ENCODE measurements at regions of chr1 and their contacts with region 1.

Region 1: GRCh38 chr1:59699227-59699847 is 115.4 kb upstream of the HOOK1 start:
- DNase-seq: peak in 1 of 2 experiments; percentile 8
- H3K4me3 ChIP-seq: no peak overlapping the region
- H3K27ac ChIP-seq: no peak overlapping the region
- H3K4me1 ChIP-seq: no peaks in the 10 kb centered on the region; the same call in 1 of the 2 replicates
- H3K27me3 ChIP-seq: no peaks in the 10 kb centered on the region
- CTCF ChIP-seq: peak; percentile 96

Region 2: GRCh38 chr1:58874757-58875755 is 824.3 kb before region 1 on chr1:
- CTCF ChIA-PET with region 1: no interaction called
- POLR2A ChIA-PET with region 1: no interaction called
- intact Hi-C with region 1: loop called (anchors 2 kb)
- DNase-seq: peak; percentile 84 to 98
- H3K4me3 ChIP-seq: no peak overlapping the region; the same call in 1 of the 2 replicates
- H3K27ac ChIP-seq: peak overlapping the region; percentile 92
- H3K4me1 ChIP-seq: peaks cover 48% of the 10 kb centered on the region
- H3K27me3 ChIP-seq: no peaks in the 10 kb centered on the region
- CTCF ChIP-seq: no peak

Region 3: DNA sequence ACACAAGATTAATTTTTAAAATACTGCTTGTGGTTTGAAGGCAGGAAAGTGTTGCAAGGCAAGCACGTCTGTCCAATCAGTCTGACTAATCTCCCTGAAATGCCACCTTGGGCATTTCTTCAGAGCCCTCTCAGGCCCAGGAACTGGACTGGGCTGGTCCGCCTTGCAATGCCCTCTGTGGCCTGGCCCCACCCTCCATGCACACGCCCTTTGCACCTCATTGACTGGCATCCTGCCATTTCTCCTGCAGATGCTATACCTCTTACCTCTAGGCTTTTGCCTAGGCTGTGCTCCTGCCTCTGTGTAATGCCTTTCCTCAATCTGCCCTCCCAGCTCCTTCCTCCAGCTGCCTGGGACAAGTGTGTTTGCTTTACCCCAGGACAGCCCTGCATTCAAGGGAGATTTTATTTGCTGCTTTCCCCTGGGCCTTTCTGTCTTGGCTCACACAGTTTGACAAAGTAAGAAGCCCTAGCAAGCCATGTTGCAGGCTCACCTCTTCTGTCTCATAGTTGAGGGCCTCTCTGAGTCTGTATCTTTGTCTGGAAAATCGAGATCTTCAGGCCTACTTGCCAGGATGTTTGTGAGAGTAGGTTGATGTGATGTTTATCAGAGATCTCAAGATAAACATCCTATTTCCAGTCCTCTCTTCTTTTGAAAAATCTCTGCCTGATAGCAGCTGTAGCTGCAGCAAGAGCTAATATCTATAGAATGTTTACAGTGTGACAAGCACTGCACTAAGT is 766.3 kb before region 1 on chr1:
- CTCF ChIA-PET with region 1: no interaction called
- POLR2A ChIA-PET with region 1: no interaction called
- intact Hi-C with region 1: loop called (anchors 2 kb)
- DNase-seq: peak; percentile 97 to 98
- H3K4me3 ChIP-seq: peak overlapping the region; percentile 13; the same call in 1 of the 2 replicates
- H3K27ac ChIP-seq: peak overlapping the region; percentile 94
- H3K4me1 ChIP-seq: peaks cover 76% of the 10 kb centered on the region
- H3K27me3 ChIP-seq: no peaks in the 10 kb centered on the region
- CTCF ChIP-seq: no peak

Region 4: GRCh38 chr1:59150577-59151391 is 548.6 kb before region 1 on chr1:
- CTCF ChIA-PET with region 1: no interaction called
- POLR2A ChIA-PET with region 1: no interaction called
- intact Hi-C with region 1: loop called (anchors 1 kb)
- DNase-seq: peak; percentile 82 to 92
- H3K4me3 ChIP-seq: peak overlapping the region; percentile 48
- H3K27ac ChIP-seq: peak overlapping the region; percentile 72
- H3K4me1 ChIP-seq: peaks cover 66% of the 10 kb centered on the region
- H3K27me3 ChIP-seq: no peaks in the 10 kb centered on the region
- CTCF ChIP-seq: no peak

Region 5: DNA sequence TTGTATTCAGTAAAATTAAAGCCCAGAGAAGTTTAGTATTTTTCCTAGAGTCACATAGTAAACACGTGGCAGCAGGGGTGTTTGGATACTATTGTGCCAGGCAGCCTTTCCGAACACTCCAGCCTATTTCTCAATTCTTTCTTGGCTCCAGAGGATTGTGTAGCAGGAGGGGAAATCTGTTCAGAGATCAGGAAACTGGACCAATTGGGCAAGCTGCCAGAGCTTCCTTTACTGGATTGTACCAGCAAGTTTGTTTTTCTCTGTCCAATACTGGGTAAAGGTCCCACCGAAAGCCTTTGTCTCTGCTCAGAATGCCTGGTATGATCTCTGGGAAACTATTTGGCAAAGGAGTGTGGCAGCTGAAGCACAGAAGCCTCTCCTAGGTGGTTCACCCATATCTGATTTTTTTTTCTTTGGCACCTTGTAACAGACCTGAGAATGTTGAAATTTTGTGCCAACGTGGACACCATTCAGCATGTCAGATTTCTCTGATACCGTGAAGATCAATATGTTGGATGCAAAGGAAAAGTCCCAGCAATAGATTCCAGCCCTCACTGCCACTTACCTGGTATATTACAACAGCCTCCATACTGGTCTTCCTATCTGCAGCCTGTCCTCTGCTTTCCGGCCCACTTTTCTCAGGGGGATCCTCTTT is 276.3 kb before region 1 on chr1:
- CTCF ChIA-PET with region 1: no interaction called
- POLR2A ChIA-PET with region 1: no interaction called
- intact Hi-C with region 1: loop called (anchors 2 kb)
- DNase-seq: peak in 1 of 2 experiments; percentile 36
- H3K4me3 ChIP-seq: no peak overlapping the region
- H3K27ac ChIP-seq: no peak overlapping the region
- H3K4me1 ChIP-seq: peaks cover 25% of the 10 kb centered on the region
- H3K27me3 ChIP-seq: no peaks in the 10 kb centered on the region
- CTCF ChIP-seq: no peak

Region 6: GRCh38 chr1:59669752-59670312 is 29.5 kb before region 1 on chr1:
- CTCF ChIA-PET with region 1: no interaction called
- POLR2A ChIA-PET with region 1: no interaction called
- intact Hi-C with region 1: no loop called
- DNase-seq: no peak
- H3K4me3 ChIP-seq: no peak overlapping the region
- H3K27ac ChIP-seq: no peak overlapping the region
- H3K4me1 ChIP-seq: no peaks in the 10 kb centered on the region
- H3K27me3 ChIP-seq: no peaks in the 10 kb centered on the region
- CTCF ChIP-seq: no peak